A673 (cell line): ENCODE measurements at regions of chr5 and their contacts with region 1.

Region 1: DNA sequence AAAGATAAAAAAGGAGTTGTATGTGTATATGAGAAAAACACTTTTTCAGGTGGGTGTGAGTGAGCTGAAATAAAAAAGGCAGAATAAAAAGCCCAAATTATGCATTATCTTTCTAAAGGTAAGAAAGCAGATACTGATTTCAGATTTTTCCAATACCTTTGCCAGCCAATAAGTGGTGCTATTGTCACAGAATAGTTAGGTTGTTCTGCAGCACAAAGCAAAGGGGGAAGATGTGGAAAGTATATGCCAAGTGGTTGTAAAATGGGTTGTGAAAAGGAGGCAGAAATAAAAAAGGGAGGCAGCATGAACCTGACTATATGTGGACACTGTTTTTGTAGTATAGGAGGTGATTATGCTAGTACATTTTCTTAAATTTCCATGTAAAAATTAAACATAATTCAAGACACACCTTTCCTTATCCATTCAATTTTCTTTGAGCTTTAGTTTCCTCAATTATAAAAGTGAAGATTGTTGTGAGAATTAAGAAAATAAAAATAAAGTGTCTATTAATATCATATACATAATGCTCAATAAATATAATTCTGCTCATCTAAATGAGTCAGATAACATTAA is 106.7 kb downstream of the SMIM15 start:
- DNase-seq: peak; percentile 75
- H3K4me3 ChIP-seq: no peak overlapping the region
- H3K27ac ChIP-seq: no peak overlapping the region
- H3K4me1 ChIP-seq: peaks cover 24% of the 10 kb centered on the region
- H3K27me3 ChIP-seq: no peaks in the 10 kb centered on the region
- CTCF ChIP-seq: peak; percentile 75

Region 2: GRCh38 chr5:61162010-61162831 is 106.7 kb after region 1 on chr5 and contains the start of gene SMIM15:
- CTCF ChIA-PET with region 1: no interaction called
- POLR2A ChIA-PET with region 1: no interaction called
- intact Hi-C with region 1: loop called (anchors 5 kb)
- DNase-seq: peak; percentile 93
- H3K4me3 ChIP-seq: peak within 1 kb of the TSS; percentile 98
- H3K27ac ChIP-seq: peak within 1 kb of the TSS; percentile 95
- H3K4me1 ChIP-seq: peaks cover 26% of the 10 kb centered on the region
- H3K27me3 ChIP-seq: no peaks in the 10 kb centered on the region
- CTCF ChIP-seq: no peak
- total RNA-seq, gene SMIM15: 78.7 and 93.5 TPM in 2 replicates

Region 3: DNA sequence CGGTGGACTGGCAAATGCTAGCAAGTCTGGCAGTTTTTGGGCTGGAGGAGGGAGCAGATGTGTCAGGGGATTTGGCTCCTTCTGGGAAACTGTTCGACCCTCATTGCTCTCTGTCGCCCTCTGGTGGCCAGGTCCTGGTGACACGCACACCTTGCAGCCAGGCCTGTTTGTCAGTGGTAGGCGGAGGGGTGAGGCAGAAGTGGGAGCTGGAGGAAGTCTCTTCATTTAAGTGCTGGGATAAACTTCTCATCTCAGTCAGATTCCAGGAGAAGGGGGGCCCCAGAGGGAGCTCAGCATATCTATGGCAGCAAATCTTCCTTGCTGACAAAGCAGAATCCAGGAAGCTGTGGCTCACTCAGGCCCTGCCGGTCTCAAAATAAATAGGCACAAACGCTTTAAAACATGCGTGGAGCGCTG is 603.1 kb after region 1 on chr5:
- CTCF ChIA-PET with region 1: no interaction called
- POLR2A ChIA-PET with region 1: no interaction called
- intact Hi-C with region 1: loop called (anchors 5 kb)
- DNase-seq: peak; percentile 86
- H3K4me3 ChIP-seq: no peak overlapping the region
- H3K27ac ChIP-seq: no peak overlapping the region
- H3K4me1 ChIP-seq: peaks cover 30% of the 10 kb centered on the region
- H3K27me3 ChIP-seq: no peaks in the 10 kb centered on the region
- CTCF ChIP-seq: peak; percentile 97

Region 4: GRCh38 chr5:61683148-61683547 is 627.6 kb after region 1 on chr5:
- CTCF ChIA-PET with region 1: no interaction called
- POLR2A ChIA-PET with region 1: no interaction called
- intact Hi-C with region 1: loop called (anchors 5 kb)
- DNase-seq: peak; percentile 62
- H3K4me3 ChIP-seq: no peak overlapping the region
- H3K27ac ChIP-seq: peak overlapping the region; percentile 96
- H3K4me1 ChIP-seq: peaks cover 43% of the 10 kb centered on the region
- H3K27me3 ChIP-seq: no peaks in the 10 kb centered on the region
- CTCF ChIP-seq: no peak

Region 5: DNA sequence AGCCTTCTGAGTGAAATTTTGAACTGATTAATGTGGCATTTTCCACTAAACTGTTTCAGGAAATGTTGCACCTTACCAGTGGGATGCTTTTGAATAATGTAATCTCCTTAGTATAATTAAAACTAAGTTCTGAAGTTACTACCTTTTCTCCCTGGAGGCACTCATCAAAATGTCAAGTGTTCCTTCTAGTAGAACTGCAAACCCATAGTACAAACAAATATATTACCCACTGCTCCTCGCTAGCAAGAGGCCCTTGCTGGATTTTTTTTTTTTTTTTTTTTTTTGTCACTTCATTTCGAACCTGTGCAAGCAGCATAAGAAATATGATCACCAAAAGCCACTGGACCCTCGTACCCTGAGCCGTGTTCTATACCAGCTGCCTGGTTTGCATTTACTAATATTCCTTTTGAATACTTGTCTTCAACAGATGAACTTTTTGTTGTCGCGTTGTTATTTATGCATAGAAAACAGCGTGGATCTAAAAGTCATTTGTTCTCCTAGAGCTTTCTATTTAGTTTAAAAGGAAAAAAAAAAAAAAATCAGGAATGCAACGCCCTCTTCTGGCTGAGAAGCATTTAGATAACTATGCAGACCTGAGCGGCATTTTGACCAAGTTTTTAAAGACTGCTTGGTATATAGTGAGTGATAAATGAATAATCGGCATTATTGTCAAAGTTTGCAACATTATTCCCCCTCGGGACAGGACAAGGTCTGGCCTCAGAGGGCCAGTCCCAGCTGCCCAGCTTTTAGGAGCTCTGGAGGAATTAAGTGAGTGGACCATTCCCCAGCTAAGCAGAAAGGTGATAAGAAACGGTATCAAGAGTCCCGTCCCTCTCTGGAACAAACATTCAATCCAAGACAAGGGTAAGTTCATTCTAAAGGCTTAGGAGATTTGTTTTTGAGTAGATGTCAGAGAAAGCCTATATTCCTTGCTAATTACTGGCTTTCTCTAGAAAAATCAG is 1088.0 kb after region 1 on chr5:
- CTCF ChIA-PET with region 1: no interaction called
- POLR2A ChIA-PET with region 1: no interaction called
- intact Hi-C with region 1: loop called (anchors 10 kb)
- DNase-seq: peak; percentile 72
- H3K4me3 ChIP-seq: peak overlapping the region; percentile 12
- H3K27ac ChIP-seq: no peak overlapping the region
- H3K4me1 ChIP-seq: peaks cover 21% of the 10 kb centered on the region
- H3K27me3 ChIP-seq: no peaks in the 10 kb centered on the region
- CTCF ChIP-seq: peak; percentile 84